Right cardiac atrium (tissue), 5 donors: ENCODE measurements at regions of chr17 and their contacts with region 1.

Region 1: GRCh38 chr17:34420254-34420766 is 57.3 kb upstream of the CCL1 start:
- DNase-seq: peak; percentile 40 to 76 (median 73)
- ATAC-seq: peak; percentile 54 to 72
- H3K4me3 ChIP-seq: no peak overlapping the region
- H3K27ac ChIP-seq: no peak overlapping the region
- H3K4me1 ChIP-seq: no peaks in the 10 kb centered on the region
- H3K27me3 ChIP-seq: no peaks in the 10 kb centered on the region

Region 2: GRCh38 chr17:34291721-34292348 is 128.5 kb before region 1 on chr17:
- intact Hi-C with region 1: no loop called
- DNase-seq: no peak
- ATAC-seq: no peak
- H3K4me3 ChIP-seq: no peak overlapping the region
- H3K27ac ChIP-seq: no peak overlapping the region
- H3K4me1 ChIP-seq: no peaks in the 10 kb centered on the region
- H3K27me3 ChIP-seq: no peaks in the 10 kb centered on the region

Region 3: GRCh38 chr17:34519282-34519681 is 99.0 kb after region 1 on chr17:
- intact Hi-C with region 1: loop called in 1 of 4 experiments (anchors 5 kb)
- DNase-seq: peak in 1 of 3 donors; percentile 18
- ATAC-seq: peak; percentile 29 to 56
- H3K4me3 ChIP-seq: no peak overlapping the region
- H3K27ac ChIP-seq: no peak overlapping the region
- H3K4me1 ChIP-seq: no peaks in the 10 kb centered on the region
- H3K27me3 ChIP-seq: no peaks in the 10 kb centered on the region

Region 4: DNA sequence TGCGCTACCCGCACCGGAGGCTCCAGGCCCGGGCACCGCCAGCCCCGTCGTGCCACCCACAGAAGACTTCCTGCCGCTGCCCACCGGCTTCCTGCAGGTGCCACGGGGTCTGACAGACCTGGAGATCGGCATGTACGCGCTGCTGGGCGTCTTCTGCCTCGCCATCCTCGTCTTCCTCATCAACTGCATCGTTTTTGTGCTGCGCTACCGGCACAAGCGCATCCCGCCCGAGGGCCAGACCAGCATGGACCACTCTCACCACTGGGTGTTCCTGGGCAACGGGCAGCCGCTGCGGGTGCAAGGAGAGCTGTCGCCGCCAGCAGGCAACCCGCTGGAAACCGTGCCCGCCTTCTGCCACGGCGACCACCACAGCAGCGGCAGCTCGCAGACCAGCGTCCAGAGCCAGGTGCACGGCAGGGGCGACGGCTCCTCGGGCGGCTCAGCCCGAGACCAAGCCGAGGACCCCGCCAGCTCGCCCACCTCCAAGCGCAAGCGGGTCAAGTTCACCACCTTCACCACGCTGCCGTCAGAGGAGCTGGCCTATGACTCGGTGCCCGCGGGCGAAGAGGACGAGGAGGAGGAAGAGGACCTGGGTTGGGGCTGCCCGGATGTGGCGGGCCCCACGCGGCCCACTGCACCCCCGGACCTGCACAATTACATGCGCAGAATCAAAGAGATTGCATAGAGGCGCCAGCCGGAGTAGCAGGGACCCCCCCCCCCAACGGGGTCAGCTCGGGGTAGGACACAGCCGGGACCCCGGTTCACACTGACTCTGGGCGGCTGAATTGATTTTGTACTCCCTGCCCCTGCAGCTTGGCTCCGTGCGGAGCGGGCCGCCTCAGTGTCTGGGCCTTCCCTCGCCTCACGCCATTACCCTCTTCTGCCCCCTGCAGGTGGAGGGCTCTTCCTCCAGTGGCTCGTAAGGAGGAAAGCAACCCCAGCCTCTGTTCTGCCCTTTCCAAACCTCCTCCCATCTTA is 217.5 kb after region 1 on chr17:
- intact Hi-C with region 1: loop called (anchors 5 kb)
- DNase-seq: peak; percentile 79 to 91 (median 89)
- ATAC-seq: peak; percentile 90 to 94
- H3K4me3 ChIP-seq: peak overlapping the region; percentile 14
- H3K27ac ChIP-seq: no peak overlapping the region
- H3K4me1 ChIP-seq: no peaks in the 10 kb centered on the region
- H3K27me3 ChIP-seq: no peaks in the 10 kb centered on the region

Region 5: DNA sequence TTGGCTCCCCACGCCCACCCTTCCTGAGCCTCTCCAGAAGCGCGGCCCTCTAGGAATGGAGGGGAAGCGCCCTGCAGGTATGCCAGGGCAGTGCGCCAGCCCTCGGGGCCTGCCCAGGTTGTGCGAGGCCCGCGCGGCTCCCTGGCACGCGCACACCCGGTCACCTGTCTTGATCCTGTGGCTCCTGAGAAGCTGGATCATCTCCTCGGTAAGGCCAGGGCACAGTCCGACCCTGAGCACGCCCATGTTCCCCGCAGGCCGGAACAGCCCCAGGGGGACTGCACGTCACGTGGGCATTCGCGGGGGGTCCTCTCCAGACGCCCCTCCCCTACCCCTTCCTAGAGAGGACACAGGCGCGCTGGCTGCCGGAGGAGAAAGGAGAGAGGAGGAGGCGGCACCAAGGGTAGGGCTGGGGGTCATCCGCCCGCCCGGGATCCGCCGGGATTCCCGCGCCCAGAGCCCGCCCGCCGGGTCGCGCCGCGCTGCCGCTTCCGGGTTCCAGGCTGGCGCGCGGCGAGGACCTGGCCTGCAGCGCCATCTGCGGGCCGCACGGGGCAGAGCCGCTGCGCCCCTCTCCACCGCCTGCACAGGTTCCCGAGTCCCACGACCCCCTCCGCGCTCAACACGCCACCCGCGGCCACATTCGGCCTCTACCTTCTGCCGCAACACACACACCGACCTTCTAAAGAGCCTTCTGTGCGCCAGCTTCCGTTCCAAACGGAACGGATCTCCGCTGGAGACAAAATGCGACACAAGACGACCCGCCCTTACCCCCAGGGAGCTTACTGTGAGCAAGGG is 699.3 kb after region 1 on chr17 and contains the start of gene RAD51D:
- intact Hi-C with region 1: loop called in 3 of 4 experiments (anchors 5 to 10 kb)
- DNase-seq: peak; percentile 77 to 92 (median 91)
- ATAC-seq: peak; percentile 94 to 95
- H3K4me3 ChIP-seq: peak within 1 kb of the TSS; percentile 48
- H3K27ac ChIP-seq: peak within 1 kb of the TSS; percentile 4
- H3K4me1 ChIP-seq: peaks cover 3% of the 10 kb centered on the region
- H3K27me3 ChIP-seq: no peaks in the 10 kb centered on the region
- total RNA-seq, gene RAD51D: 5.8 to 7.1 (median 6.4) TPM